ENCODE measurements at regions of chr12 and their contacts with region 1.

Region 1: GRCh38 chr12:74689071-74689655 is 151.5 kb downstream of the ATXN7L3B start:
- DNase-seq: no peak
- H3K4me3 Mint-ChIP-seq: no peak overlapping the region
- H3K27ac Mint-ChIP-seq: no peak overlapping the region
- H3K4me1 Mint-ChIP-seq: no peaks in the 10 kb centered on the region
- H3K27me3 Mint-ChIP-seq: peaks cover 2% of the 10 kb centered on the region

Region 2: GRCh38 chr12:75289753-75290152 is 600.6 kb after region 1 on chr12:
- intact Hi-C with region 1: loop called (anchors 5 kb)
- DNase-seq: no peak
- H3K4me3 Mint-ChIP-seq: no peak overlapping the region
- H3K27ac Mint-ChIP-seq: no peak overlapping the region
- H3K4me1 Mint-ChIP-seq: no peaks in the 10 kb centered on the region
- H3K27me3 Mint-ChIP-seq: peaks cover 3% of the 10 kb centered on the region